ENCODE measurements at regions of chr10 and their contacts with region 1.

Region 1: DNA sequence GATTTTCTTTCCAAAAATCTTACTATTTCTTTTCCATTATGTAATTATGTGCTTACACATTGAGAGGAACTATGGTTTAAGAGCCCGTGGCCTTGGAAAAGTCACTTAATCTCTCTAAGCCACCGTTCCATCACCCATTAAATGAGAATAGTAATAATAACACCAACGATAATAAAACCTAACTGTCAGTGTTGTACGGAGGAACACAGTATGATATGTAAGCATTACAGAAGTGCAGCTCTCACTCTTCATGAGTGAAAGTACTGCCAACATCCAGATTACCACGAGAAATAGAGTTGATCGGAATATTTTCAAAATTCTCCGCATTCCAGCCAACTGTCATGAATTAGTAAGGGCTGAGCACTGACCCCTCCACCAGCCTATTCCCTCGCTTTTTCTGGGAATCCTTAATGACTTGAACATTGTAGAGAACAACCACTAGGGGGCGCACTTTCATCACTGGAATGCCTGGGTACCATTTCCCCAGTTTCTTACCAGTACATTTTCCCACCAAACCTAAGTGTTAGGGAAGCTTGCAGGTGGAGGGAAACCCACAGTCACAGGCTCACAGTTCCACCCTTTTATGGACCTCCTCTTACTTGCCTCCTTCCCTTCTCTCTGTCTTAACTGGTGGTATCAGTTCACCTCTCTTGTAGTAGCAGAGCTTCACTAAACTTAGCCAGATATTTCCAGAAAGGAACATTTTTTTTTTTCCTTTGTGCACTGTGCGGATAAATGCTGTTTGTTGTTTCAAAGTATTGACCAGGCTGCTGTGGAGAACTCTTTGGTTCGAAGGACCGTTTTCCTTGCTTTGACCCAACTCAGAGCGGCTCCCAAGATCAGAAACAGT is 27.8 kb downstream of the NKX2-3 start:
- DNase-seq: no peak
- H3K4me3 ChIP-seq: no peak overlapping the region
- CTCF ChIP-seq: peak; percentile 56

Region 2: GRCh38 chr10:99548041-99548530 is 12.4 kb before region 1 on chr10:
- CTCF ChIA-PET with region 1: interaction called, 24 read pairs
- POLR2A ChIA-PET with region 1: no interaction called
- DNase-seq: no peak
- H3K4me3 ChIP-seq: no peak overlapping the region
- CTCF ChIP-seq: peak; percentile 47

Region 3: GRCh38 chr10:99573790-99574189 is 13.3 kb after region 1 on chr10:
- CTCF ChIA-PET with region 1: interaction called, 16 read pairs
- POLR2A ChIA-PET with region 1: no interaction called
- DNase-seq: no peak
- H3K4me3 ChIP-seq: no peak overlapping the region
- CTCF ChIP-seq: no peak

Region 4: DNA sequence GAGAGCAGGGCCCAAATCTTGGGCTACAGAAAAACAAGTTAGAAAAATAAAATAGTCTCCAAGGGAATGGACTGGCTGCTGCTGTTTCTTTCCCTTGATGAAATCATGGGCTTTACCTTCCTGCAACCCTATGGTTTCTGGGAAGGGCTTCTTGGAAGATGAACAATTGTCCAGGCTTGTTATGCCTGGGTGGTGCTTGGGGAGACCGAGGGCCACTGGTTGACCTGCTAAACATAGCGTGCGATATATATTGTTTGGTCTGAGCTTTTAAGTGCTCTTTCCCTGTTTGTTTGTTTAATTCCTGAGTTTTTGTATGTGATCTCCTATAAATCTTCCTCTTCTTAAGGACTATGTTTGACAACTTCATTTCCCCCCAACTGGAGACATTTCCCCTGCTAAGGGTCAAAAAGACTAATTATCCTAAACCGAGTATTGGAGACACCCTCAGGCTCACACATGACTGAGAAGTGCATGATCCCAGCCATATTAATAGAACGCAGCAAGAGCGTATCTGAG is 21.8 kb after region 1 on chr10:
- CTCF ChIA-PET with region 1: interaction called, 10 read pairs
- POLR2A ChIA-PET with region 1: no interaction called
- DNase-seq: no peak
- H3K4me3 ChIP-seq: no peak overlapping the region
- CTCF ChIP-seq: no peak

Region 5: DNA sequence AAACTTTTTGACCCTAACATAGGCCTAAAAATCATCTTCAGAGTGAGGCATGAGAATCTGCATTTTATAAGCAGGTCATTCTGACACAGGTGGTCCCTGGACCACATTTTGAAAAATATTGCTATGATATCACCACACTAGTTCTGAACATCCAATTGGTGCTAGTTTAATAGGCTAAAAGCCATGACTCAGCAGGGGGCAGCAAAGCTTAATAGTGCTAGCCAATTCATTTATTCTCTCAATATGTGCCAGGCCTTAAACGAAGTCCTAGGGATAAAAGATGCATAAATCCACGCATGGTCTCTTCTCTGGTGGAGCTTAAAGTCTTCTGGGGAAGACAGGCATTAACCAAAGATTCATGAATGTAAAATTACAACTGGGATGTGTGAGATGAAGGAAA is 69.9 kb after region 1 on chr10:
- CTCF ChIA-PET with region 1: no interaction called
- POLR2A ChIA-PET with region 1: no interaction called
- DNase-seq: no peak
- H3K4me3 ChIP-seq: no peak overlapping the region
- CTCF ChIP-seq: peak; percentile 58